Activated B cell treated with CpG ODN at 0.5 μM for 24 hours (primary cell): ENCODE measurements at regions of chr7 and their contacts with region 1.

Region 1: DNA sequence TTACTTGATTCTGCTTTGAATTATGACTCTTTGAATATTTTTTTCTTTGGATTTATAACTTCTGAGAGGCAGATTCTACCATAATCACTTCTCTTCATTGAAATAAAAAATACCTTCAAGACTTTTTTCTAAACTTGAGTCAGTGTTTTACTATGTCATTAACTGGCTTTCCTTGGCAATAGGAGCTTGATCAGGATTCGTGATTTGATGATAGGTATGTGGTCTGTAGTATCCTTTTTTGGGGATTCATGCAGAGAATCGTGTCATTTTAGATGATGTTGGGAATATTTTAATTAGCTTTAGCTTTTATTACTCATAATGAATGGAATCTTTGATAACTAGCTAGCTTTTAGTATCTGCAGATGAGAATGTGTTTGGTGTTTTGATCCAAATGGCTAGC is 83.3 kb downstream of the PHTF2 start:
- DNase-seq: no peak
- ATAC-seq: no peak
- H3K4me3 Mint-ChIP-seq: no peak overlapping the region
- H3K27ac Mint-ChIP-seq: no peak overlapping the region
- H3K4me1 Mint-ChIP-seq: peaks cover 39% of the 10 kb centered on the region
- H3K27me3 Mint-ChIP-seq: no peaks in the 10 kb centered on the region
- CTCF ChIP-seq: no peak

Region 2: DNA sequence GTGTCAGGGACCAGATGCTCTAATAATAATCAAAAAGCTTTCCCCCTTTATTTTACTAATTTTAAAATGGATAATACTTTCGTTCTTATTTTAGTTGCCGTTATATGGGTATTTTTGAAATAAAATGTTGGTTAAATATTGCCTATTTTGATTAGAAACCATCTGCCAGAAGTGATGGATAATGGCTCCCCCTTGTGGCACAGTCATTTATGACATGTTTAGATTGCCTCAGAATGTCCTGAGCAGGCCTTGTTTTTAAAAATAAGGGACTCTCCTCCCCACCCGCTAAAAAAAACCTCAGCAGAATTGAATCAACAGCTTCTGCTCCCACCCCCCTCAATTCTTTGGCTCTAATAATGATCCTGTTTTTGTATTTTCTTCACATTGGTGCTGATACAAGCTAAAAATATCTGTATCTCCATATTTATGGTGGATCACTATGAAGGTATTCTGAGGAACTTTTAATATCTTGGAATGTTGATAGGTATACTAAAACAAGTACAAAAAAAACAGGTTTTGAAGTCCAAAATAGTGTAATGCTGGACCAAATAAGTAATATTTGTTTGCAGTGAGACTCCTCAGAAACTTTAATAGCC is 122.5 kb before region 1 on chr7:
- CTCF ChIA-PET with region 1: no interaction called
- POLR2A ChIA-PET with region 1: no interaction called
- intact Hi-C with region 1: no loop called
- DNase-seq: no peak
- ATAC-seq: peak; percentile 64
- H3K4me3 Mint-ChIP-seq: no peak overlapping the region
- H3K27ac Mint-ChIP-seq: peak overlapping the region; percentile 50
- H3K4me1 Mint-ChIP-seq: peaks cover 52% of the 10 kb centered on the region
- H3K27me3 Mint-ChIP-seq: no peaks in the 10 kb centered on the region
- CTCF ChIP-seq: peak; percentile 22

Region 3: GRCh38 chr7:77866786-77867536 is 14.9 kb before region 1 on chr7:
- CTCF ChIA-PET with region 1: no interaction called
- POLR2A ChIA-PET with region 1: no interaction called
- intact Hi-C with region 1: loop called (anchors 2 kb)
- DNase-seq: no peak
- ATAC-seq: no peak
- H3K4me3 Mint-ChIP-seq: no peak overlapping the region
- H3K27ac Mint-ChIP-seq: no peak overlapping the region
- H3K4me1 Mint-ChIP-seq: peaks cover 54% of the 10 kb centered on the region
- H3K27me3 Mint-ChIP-seq: no peaks in the 10 kb centered on the region
- CTCF ChIP-seq: no peak